ENCODE measurements at regions of chr6 and their contacts with region 1.

Region 1: GRCh38 chr6:111997078-111997852 is 56.6 kb upstream of the CCN6 start:
- DNase-seq: peak; percentile 71
- ATAC-seq: peak; percentile 98
- H3K4me3 ChIP-seq: no peak overlapping the region
- H3K27ac ChIP-seq: no peak overlapping the region
- H3K4me1 ChIP-seq: 0 out of 2 replicates have a peak, but pooled peaks cover 5% of the 10 kb centered on the region
- H3K27me3 ChIP-seq: peaks cover 0 to 28% of the 10 kb centered on the region in 2 experiments; a peak in 3 of 5 replicates
- CTCF ChIP-seq: peak; percentile 98
- EP300 ChIP-seq: no peak
- POLR2A ChIP-seq: no peak
- RAD21 ChIP-seq: peak; percentile 91

Region 2: DNA sequence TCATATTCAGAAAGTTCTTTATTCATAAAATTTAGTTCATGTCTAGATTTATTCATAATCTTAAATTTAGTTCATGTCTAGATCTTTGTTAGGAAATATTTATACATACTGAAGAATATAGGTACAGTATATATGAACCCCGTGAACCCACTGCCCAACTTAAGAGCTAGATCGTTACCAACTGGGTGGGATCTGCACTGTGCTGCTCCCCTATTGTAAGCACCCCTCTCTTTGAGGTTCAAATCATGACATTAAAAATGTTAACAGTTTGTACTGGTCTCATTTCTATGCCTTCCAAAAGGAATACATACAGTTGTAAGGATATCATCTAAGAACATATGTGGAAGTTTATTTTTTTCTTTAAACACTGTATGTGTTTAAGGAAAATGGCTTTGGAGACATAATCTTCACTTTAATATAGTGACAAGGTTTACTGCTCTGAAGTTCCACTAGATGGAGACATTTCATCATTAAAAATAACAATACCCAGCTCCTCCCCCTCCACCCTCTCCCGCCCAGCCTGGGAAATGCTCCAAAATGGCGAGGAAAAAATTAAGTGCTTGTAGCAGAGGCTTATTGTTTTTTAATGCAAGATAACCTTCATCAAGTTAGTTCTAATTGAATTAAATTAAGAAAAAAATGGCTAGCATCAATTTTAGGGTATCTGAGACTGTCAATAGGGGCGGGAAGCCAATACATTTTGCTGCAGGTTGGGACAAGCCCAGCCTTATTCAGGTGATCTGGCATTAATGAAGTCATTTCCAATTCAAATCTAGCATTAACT is 287.5 kb before region 1 on chr6:
- CTCF ChIA-PET with region 1: interaction called, 42 read pairs
- POLR2A ChIA-PET with region 1: no interaction called
- in situ Hi-C with region 1: loop called (anchors 5 kb)
- intact Hi-C with region 1: loop called (anchors 1 kb)
- DNase-seq: peak; percentile 68
- ATAC-seq: peak; percentile 97
- H3K4me3 ChIP-seq: no peak overlapping the region
- H3K27ac ChIP-seq: no peak overlapping the region
- H3K4me1 ChIP-seq: no peaks in the 10 kb centered on the region
- H3K27me3 ChIP-seq: no peaks in the 10 kb centered on the region
- CTCF ChIP-seq: peak; percentile 77
- EP300 ChIP-seq: no peak
- POLR2A ChIP-seq: no peak
- RAD21 ChIP-seq: peak; percentile 84

Region 3: DNA sequence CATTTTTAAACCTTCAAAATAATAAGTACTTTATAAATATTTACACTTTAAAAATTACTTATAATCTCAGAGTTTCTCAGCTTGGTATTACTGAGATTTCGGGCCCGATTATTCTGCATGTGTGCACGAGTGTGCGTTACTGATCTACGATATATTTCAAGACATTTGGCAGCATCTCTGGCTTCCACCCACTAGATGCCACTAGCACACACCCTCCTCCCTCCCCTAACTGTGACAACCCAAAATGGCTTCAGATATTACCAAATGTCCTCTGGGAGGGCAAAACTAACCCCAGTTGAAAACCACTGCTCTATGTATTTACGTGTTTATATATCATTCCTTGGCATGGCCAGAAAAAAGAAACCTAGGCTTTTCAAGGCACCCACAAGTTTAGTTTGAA is 219.9 kb before region 1 on chr6:
- CTCF ChIA-PET with region 1: no interaction called
- POLR2A ChIA-PET with region 1: no interaction called
- in situ Hi-C with region 1: no loop called
- intact Hi-C with region 1: loop called (anchors 5 kb)
- DNase-seq: no peak
- ATAC-seq: peak; percentile 43; the same call in 1 of the 3 replicates
- H3K4me3 ChIP-seq: no peak overlapping the region
- H3K27ac ChIP-seq: no peak overlapping the region
- H3K4me1 ChIP-seq: no peaks in the 10 kb centered on the region
- H3K27me3 ChIP-seq: no peaks in the 10 kb centered on the region
- CTCF ChIP-seq: 0 out of 2 replicates have a peak, but pooled peaks have one; percentile 10
- EP300 ChIP-seq: no peak
- POLR2A ChIP-seq: no peak
- RAD21 ChIP-seq: no peak

Region 4: GRCh38 chr6:111873178-111874024 is 123.9 kb before region 1 on chr6 and contains the start of gene FYN:
- CTCF ChIA-PET with region 1: no interaction called
- POLR2A ChIA-PET with region 1: no interaction called
- in situ Hi-C with region 1: no loop called
- intact Hi-C with region 1: loop called (anchors 1 kb)
- DNase-seq: peak; percentile 92
- ATAC-seq: peak; percentile 99
- H3K4me3 ChIP-seq: peak within 1 kb of the TSS; percentile 66 to 82 (median 68)
- H3K27ac ChIP-seq: no peak within 1 kb of the TSS
- H3K4me1 ChIP-seq: peaks cover 40% of the 10 kb centered on the region
- H3K27me3 ChIP-seq: peaks cover 0 to 21% of the 10 kb centered on the region in 2 experiments; a peak in 4 of 5 replicates
- CTCF ChIP-seq: peak; percentile 47
- EP300 ChIP-seq: no peak
- POLR2A ChIP-seq: no peak; a peak in 1 of 4 replicates
- RAD21 ChIP-seq: peak; percentile 56; the same call in 1 of the 2 replicates
- total RNA-seq, gene FYN: 14.6 and 15.5 TPM in 2 replicates

Region 5: GRCh38 chr6:111888928-111889695 is 108.2 kb before region 1 on chr6:
- CTCF ChIA-PET with region 1: no interaction called
- POLR2A ChIA-PET with region 1: no interaction called
- in situ Hi-C with region 1: no loop called
- intact Hi-C with region 1: no loop called
- DNase-seq: no peak
- ATAC-seq: no peak
- H3K4me3 ChIP-seq: no peak overlapping the region
- H3K27ac ChIP-seq: no peak overlapping the region
- H3K4me1 ChIP-seq: no peaks in the 10 kb centered on the region
- H3K27me3 ChIP-seq: peaks cover 0 to 3% of the 10 kb centered on the region in 2 experiments; a peak in 1 of 5 replicates
- CTCF ChIP-seq: no peak
- EP300 ChIP-seq: no peak
- POLR2A ChIP-seq: no peak
- RAD21 ChIP-seq: no peak